ENCODE measurements at regions of chr1 and their contacts with region 1.

Region 1: GRCh38 chr1:167533851-167534300 is 15.5 kb upstream of the CD247 start:
- DNase-seq: no peak
- H3K4me3 ChIP-seq: no peak overlapping the region
- H3K27me3 ChIP-seq: peaks cover 2% of the 10 kb centered on the region; the same call in 1 of the 2 replicates
- CTCF ChIP-seq: peak; percentile 94

Region 2: DNA sequence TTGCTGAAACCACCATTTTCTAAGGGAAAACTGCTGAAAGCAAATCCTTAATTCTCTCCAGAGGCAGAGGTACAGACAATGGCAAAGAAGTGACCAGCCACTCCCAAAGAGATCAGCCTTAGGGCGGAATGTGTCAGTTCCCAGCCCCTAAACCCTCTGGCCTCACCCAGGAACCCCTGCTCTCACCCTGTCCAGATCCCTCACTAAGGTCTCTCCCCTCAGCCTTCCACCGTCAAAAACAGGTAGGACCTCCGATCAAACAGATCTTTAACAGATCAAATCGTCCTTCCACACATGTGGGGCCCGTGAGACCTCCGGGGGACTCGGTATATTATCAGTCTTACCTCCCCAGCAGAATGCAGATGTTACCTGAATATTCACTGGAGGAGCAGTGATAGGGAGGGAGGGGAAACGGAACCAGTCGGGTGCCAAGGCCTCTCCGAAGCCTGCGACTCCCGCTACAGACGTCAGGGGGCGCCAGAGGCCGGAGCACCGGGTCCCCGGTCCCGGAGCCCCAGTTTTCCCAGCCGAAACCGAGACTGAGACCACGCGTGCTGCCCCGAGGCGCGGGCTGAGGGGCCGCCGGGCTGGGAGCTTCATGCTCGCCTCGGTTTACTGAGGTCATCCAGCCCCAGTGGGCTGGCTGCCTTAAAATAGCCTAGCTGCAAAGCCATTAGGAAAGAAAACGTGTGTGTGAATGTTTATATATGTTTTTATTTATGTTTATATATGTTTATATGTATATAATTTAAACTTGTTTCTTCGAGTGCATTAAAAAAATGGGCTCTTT is 467.3 kb before region 1 on chr1:
- CTCF ChIA-PET with region 1: interaction called, 39 read pairs
- POLR2A ChIA-PET with region 1: no interaction called
- DNase-seq: no peak
- H3K4me3 ChIP-seq: no peak overlapping the region
- H3K27me3 ChIP-seq: no peaks in the 10 kb centered on the region
- CTCF ChIP-seq: peak; percentile 96

Region 3: DNA sequence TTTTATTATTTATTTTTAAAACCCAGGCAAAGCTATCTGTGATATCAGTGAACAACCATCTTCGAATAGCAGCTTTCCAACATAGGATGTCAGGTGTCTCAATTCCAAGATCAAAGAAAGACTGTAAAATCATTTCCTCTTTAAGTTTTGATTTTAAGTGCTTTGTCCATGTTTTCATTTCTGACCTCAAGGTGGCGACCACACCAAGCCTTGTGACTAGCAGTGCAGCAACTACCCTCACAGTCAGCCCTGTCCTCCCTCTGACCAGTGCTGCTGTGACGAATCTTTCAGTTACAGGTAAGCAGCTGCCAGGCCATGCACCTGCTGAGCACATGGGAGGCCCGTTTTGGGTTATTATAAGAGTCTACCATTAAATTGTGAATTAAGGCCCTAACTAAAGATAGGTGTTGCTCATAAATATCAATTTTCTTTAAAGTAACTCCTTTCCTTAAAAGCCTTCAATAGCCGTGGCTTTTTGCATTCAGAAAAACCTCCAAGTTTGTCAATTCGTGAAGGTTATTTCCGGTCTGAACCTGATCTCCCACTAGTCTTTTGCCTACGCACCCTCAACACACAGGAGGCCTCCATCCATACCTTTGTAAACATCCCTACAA is 132.5 kb before region 1 on chr1:
- CTCF ChIA-PET with region 1: interaction called, 16 read pairs
- POLR2A ChIA-PET with region 1: no interaction called
- DNase-seq: no peak
- H3K4me3 ChIP-seq: no peak overlapping the region
- H3K27me3 ChIP-seq: no peaks in the 10 kb centered on the region
- CTCF ChIP-seq: peak; percentile 65

Region 4: DNA sequence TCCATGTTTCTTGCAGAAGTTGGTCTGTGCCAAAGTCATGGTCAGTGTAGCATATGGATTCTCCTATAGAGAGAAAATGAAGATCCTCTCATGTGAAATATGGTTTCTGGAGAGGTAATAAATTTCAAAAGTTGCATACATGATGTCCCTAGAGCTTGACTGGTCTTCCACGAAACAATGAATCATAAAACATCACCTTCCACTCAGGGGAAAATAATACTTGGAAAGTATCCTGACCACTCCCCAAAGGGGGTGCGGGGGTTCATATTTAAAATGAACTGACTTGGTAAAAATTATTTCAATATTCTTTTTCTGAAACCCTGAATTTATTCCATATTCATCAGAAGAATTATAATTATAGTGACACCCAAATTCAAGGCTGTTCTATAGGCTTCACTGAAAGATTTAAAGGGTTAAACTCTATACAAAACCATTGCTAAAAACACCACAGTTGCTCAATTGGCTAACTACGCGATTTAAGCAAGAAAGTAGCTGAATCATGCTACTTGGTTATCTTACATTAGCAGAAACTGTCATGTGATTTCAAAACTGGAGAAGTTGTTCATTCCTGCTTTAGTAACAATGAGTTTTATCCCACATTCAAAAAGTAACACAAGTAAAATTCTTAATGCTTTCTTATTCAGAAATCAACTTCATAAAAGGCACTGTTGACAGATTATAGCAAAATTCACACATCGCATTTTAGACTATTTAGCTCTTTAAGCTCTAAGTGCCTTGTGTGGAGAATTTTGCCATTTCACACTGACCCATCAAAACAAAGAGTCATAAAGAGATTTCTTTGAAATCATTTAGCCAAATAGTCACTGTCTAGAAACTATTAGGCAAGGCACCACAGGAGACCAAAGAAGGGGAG is 14.4 kb after region 1 on chr1:
- CTCF ChIA-PET with region 1: interaction called, 21 read pairs
- POLR2A ChIA-PET with region 1: no interaction called
- DNase-seq: no peak
- H3K4me3 ChIP-seq: no peak overlapping the region
- H3K27me3 ChIP-seq: no peaks in the 10 kb centered on the region
- CTCF ChIP-seq: no peak

Measured in BJ (cell line).